Thyroid gland (tissue), 4 donors: ENCODE measurements at regions of chr4 and their contacts with region 1.

Region 1: DNA sequence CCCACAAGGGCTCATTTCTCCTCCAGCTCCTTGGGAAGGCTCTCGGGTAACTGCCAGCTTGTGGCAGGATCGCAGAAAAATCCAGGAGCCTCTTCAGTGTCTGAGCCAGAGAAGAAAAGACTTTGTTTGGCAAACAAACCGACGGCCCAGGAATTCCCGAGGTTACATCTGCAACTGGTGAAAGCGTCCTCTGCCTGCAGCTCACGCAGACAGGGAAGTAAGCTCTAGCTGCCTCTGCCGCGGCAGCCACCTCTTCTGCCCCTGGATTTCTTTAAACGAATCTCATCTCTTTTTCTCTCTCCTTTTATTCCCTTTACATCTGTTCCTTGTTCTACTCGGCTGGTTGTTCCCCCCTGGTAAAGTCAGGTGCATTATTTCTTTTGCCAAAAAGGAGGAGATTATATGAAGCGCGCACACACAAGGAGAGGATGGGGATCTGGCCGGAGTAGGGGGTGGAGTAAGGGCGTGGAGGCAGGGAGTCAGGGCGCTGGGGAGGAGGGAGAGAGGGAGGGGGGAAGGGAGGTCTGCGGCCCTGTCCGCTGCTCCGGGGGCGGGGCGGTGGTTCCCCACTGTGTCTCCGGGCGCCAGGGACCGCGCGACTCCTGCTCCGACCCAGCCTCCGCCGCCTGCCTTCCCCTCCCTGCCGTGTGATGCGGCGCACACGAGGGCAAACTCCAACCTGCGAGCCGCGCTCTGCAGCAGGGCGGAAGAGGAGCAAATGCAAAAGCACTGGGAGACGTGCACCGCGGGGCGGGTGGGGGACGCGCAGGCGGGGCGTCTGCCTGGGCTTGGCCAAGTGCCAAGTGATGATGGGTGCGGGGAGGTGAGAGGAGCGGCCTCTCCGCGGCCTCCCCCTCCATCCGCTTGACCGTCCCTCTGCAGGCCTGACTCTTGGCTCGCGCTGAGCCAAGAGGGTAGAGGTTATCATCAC is at the start of gene DCHS2:
- DNase-seq: peak; percentile 27 to 39
- H3K4me3 ChIP-seq: peak within 1 kb of the TSS in 2 of 3 donors; percentile 21 to 29
- H3K27ac ChIP-seq: no peak within 1 kb of the TSS
- H3K4me1 ChIP-seq: peaks cover 11 to 25% of the 10 kb centered on the region in 2 donors
- H3K27me3 ChIP-seq: peaks cover 8% of the 10 kb centered on the region
- CTCF ChIP-seq: no peak
- POLR2A ChIP-seq: no peak
- total RNA-seq, gene DCHS2: 0.40 to 1.4 (median 0.61) TPM

Region 2: GRCh38 chr4:154416190-154416547 is 75.4 kb before region 1 on chr4:
- intact Hi-C with region 1: loop called (anchors 10 kb)
- DNase-seq: peak; percentile 42 to 49
- H3K4me3 ChIP-seq: peak overlapping the region in 2 of 3 donors; percentile 38 to 41
- H3K27ac ChIP-seq: peak overlapping the region; percentile 38 to 64 (median 59)
- H3K4me1 ChIP-seq: no peaks in the 10 kb centered on the region
- H3K27me3 ChIP-seq: no peaks in the 10 kb centered on the region
- CTCF ChIP-seq: no peak
- POLR2A ChIP-seq: no peak